GM12878 (cell line): ENCODE measurements at regions of chr10 and their contacts with region 1.

Region 1: DNA sequence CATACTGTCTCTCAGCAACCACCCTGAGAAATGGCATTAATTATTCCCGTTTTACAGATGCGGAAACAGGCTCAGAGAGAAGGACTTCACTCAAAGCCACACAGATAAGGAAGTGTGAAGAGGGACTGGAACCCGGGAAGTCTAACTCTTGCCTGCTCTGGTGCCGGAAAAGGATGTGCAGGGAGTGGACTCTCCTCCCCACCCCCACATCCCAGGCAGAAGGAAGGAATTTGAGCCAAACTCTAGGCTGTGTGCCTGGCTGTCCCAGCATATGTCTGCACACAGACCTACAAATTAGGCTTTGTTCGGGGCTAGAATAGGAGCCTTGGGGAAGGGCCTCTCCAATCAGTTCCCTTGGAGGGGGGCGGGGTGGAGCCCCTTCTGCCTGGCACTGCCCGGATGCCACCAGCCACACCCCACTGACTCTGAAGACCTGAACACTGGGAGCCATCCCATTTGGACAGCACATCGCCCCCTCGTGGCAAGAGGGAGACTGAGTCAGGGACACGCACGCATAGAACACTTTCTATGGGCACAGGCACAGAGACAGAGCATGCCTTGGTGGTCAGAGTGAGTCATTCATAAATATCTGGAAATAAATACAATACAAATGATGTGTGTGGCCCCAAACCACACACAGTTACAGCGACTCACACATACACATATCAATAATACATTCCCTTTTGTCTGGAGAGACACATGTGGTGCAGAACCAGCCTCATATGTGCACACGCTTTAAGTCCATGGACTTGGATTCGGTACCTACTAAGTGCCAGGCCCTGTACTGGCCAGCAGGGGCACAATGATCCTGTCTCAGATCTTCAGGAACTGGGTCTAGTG is 13.1 kb downstream of the LZTS2 start:
- DNase-seq: peak; percentile 61
- ATAC-seq: peak; percentile 91
- H3K4me3 ChIP-seq: no peak overlapping the region
- H3K27ac ChIP-seq: no peak overlapping the region
- H3K4me1 ChIP-seq: peaks cover 3% of the 10 kb centered on the region; the same call in 1 of the 2 replicates
- H3K27me3 ChIP-seq: peaks cover 3 to 8% of the 10 kb centered on the region in 2 experiments
- CTCF ChIP-seq: peak; percentile 82 to 96 (median 92); a peak in 5 of 6 replicates
- EP300 ChIP-seq: no peak
- POLR2A ChIP-seq: no peak
- RAD21 ChIP-seq: peak; percentile 65

Region 2: DNA sequence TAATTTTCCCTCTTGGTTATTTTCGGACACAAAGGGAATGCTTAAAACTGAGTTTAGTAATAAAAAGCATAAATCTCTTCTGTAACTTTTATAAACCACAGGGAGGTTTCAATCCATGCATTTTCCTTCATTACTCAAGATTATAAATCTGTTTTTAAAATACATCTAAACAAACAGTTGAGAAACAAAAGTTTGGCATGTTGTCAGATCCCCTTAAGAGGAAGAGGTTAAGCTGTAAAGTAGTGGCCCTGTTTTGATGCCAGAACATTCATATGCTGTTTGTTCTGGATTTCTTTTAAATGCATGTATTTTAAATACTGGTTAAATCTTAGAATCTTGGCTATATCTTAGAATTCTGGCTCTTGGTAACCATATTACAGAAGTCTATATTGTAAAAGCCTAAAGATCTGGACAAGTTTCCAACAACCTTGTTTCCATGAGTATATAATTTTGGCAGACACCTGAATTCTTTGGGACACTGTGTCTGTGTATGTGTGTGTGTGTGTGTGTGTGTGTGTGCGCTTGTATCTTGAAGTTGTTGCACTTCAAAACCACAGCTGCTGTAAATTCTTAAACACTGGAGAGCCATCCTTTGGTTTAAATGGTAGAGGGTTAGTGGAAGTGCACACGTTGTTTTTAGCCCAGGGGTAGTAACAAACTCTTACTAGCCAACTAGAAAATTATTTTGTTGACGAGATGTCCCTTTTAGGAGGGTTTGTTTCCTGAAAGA is 50.2 kb before region 1 on chr10:
- CTCF ChIA-PET with region 1: interaction called, 21 read pairs
- POLR2A ChIA-PET with region 1: no interaction called
- RAD21 ChIA-PET with region 1: interaction called, 4 read pairs
- SMC1A ChIA-PET with region 1: interaction called, 3 read pairs
- in situ Hi-C with region 1: no loop called
- intact Hi-C with region 1: no loop called
- DNase-seq: no peak
- ATAC-seq: no peak
- H3K4me3 ChIP-seq: no peak overlapping the region
- H3K27ac ChIP-seq: no peak overlapping the region
- H3K4me1 ChIP-seq: no peaks in the 10 kb centered on the region
- H3K27me3 ChIP-seq: no peaks in the 10 kb centered on the region
- CTCF ChIP-seq: no peak
- EP300 ChIP-seq: no peak
- POLR2A ChIP-seq: no peak
- RAD21 ChIP-seq: no peak

Region 3: GRCh38 chr10:100969187-100970075 is 43.3 kb before region 1 on chr10 and contains the start of gene SEMA4G:
- CTCF ChIA-PET with region 1: interaction called, 21 read pairs
- POLR2A ChIA-PET with region 1: no interaction called
- RAD21 ChIA-PET with region 1: interaction called, 3 read pairs
- SMC1A ChIA-PET with region 1: interaction called, 3 read pairs
- in situ Hi-C with region 1: no loop called
- intact Hi-C with region 1: loop called (anchors 1 kb)
- DNase-seq: no peak
- ATAC-seq: peak; percentile 94
- H3K4me3 ChIP-seq: peak within 1 kb of the TSS; percentile 50; the same call in 1 of the 2 replicates
- H3K27ac ChIP-seq: no peak within 1 kb of the TSS
- H3K4me1 ChIP-seq: peaks cover 3% of the 10 kb centered on the region; the same call in 1 of the 2 replicates
- H3K27me3 ChIP-seq: no peaks in the 10 kb centered on the region
- CTCF ChIP-seq: peak; percentile 54 to 82 (median 64)
- EP300 ChIP-seq: no peak
- POLR2A ChIP-seq: peak; percentile 26; the same call in 1 of the 2 replicates
- RAD21 ChIP-seq: no peak
- polyA plus RNA-seq, gene SEMA4G: not detected

Region 4: DNA sequence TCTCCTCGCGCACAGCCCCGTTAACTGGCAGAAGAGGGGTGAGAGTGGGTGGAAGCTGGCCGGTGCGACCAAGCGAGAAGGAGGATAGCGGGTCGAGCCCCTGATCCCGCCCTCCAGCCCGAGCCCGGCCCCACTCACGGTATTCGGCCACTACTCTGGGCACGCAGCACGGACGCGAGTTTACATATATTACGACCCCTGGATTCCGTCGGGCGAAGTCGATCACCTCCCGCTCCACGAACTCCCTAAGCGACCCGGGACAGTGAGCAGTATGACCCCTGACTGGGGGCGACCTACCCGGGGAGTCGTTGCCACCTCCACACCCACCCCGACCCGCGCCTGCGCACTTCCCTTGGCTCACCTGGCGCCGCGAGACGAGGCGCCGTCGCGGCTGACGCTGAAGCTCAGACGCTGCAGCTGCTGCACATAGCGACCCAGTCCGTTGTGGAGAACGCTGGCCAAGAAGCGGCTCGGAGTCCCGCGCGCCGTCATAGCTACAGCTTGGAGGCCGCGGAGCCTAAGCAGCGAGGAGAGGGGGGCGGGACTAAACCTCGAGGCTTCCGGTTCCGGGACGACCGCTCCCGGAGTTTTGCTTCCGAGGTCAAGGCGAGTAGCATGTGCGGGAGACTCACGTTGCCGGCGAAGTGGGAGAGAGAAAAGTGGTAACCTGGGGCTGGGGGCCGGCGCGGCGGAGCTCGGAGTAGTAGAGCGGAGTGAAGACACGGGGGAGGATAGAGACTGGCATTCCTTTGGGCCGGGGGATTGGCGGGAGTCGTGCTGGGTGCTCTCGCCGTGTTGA is 25.6 kb before region 1 on chr10 and contains the starts of genes MRPL43 and TWNK:
- CTCF ChIA-PET with region 1: interaction called, 28 read pairs
- POLR2A ChIA-PET with region 1: no interaction called
- RAD21 ChIA-PET with region 1: interaction called, 6 read pairs
- SMC1A ChIA-PET with region 1: interaction called, 4 read pairs
- in situ Hi-C with region 1: no loop called
- intact Hi-C with region 1: no loop called
- DNase-seq: no peak
- ATAC-seq: peak; percentile 96
- H3K4me3 ChIP-seq: peak within 1 kb of the TSS; percentile 98
- H3K27ac ChIP-seq: peak within 1 kb of the TSS; percentile 71
- H3K4me1 ChIP-seq: peaks cover 16% of the 10 kb centered on the region
- H3K27me3 ChIP-seq: no peaks in the 10 kb centered on the region
- CTCF ChIP-seq: no peak
- EP300 ChIP-seq: no peak
- POLR2A ChIP-seq: peak; percentile 94
- RAD21 ChIP-seq: no peak
- polyA plus RNA-seq, gene MRPL43: 16.6 to 24.2 TPM
- polyA plus RNA-seq, gene TWNK: 13.6 to 19.0 TPM

Region 5: GRCh38 chr10:100993986-100994708 is 18.6 kb before region 1 on chr10:
- CTCF ChIA-PET with region 1: interaction called, 91 read pairs
- POLR2A ChIA-PET with region 1: interaction called, 11 read pairs
- RAD21 ChIA-PET with region 1: interaction called, 26 read pairs
- SMC1A ChIA-PET with region 1: interaction called, 9 read pairs
- in situ Hi-C with region 1: no loop called
- intact Hi-C with region 1: loop called (anchors 1 kb)
- DNase-seq: no peak
- ATAC-seq: no peak
- H3K4me3 ChIP-seq: no peak overlapping the region
- H3K27ac ChIP-seq: no peak overlapping the region
- H3K4me1 ChIP-seq: peaks cover 13% of the 10 kb centered on the region
- H3K27me3 ChIP-seq: no peaks in the 10 kb centered on the region
- CTCF ChIP-seq: peak; percentile 28 to 45 (median 32); a peak in 5 of 6 replicates
- EP300 ChIP-seq: no peak
- POLR2A ChIP-seq: no peak
- RAD21 ChIP-seq: no peak

Region 6: DNA sequence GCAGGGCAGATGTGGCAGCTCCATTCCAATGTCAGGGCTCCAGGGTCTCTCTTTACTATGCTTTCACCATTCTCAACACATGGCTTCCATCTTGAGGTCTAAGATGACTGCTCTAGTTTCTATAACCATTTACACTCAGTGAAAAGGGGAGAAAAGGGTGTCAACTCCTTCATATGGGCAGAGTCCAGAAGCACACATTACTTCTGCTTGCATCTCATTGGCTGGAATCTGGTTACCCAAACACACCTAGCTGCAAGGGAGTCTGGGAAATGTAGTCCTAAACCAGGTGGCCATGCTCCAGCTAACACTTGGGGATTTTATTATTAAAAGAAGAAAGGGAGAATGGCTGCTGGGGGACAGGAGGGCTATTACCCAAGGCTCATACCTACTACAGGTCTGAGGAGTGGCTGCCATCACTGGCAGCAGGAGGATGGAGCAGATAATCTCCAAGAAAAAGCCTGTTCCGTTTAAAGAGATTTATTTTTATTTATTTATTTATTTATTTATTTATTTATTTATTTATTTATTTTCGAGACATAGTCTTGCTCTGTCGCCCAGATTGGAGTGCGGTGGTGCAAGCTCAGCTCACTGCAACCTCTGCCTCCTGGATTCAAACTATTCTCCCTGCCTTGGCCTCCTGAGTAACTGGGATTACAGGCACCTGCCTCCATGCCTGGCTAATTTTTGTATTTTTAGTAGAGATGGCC is 245.6 kb after region 1 on chr10:
- CTCF ChIA-PET with region 1: no interaction called
- POLR2A ChIA-PET with region 1: no interaction called
- RAD21 ChIA-PET with region 1: no interaction called
- SMC1A ChIA-PET with region 1: no interaction called
- in situ Hi-C with region 1: no loop called
- intact Hi-C with region 1: no loop called
- DNase-seq: no peak
- ATAC-seq: peak; percentile 87
- H3K4me3 ChIP-seq: no peak overlapping the region
- H3K27ac ChIP-seq: no peak overlapping the region
- H3K4me1 ChIP-seq: no peaks in the 10 kb centered on the region
- H3K27me3 ChIP-seq: peaks cover 2 to 3% of the 10 kb centered on the region in 2 experiments; a peak in 3 of 4 replicates
- CTCF ChIP-seq: no peak
- EP300 ChIP-seq: no peak
- POLR2A ChIP-seq: no peak
- RAD21 ChIP-seq: no peak